Gastrocnemius medialis (tissue), 4 donors: ENCODE measurements at regions of chr9 and their contacts with region 1.

Region 1: DNA sequence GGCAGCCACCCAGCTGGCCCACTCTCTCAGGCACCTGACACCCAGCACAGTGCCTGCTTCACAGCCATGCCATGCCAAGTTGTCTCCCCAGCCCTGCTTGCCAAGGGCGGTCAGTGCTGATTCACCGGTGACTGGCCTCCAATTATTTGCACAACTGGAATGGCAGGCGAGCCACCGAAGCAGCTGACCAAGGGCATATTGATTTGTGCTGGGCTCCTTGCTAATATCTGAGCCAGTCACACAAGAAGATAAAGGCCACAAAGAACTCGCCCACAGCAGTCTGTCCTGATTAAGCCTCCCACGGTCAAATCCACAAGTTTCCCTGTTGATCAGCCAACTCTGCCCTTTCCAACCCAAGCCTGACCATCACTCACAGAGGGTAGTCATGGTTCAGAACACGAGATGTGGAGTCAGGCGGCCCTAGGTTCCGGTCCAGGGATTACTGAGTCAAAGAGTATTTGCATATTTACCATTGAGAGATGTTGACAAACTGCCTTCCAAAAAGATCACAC is 6.4 kb upstream of the EEIG1 start:
- DNase-seq: peak; percentile 89 to 95
- ATAC-seq: peak; percentile 92 to 96
- H3K4me3 ChIP-seq: no peak overlapping the region
- H3K27ac ChIP-seq: peak overlapping the region; percentile 76 to 83 (median 82)
- H3K4me1 ChIP-seq: peaks cover 14 to 25% of the 10 kb centered on the region in 2 donors
- H3K27me3 ChIP-seq: no peaks in the 10 kb centered on the region
- CTCF ChIP-seq: no peak
- POLR2A ChIP-seq: no peak

Region 2: DNA sequence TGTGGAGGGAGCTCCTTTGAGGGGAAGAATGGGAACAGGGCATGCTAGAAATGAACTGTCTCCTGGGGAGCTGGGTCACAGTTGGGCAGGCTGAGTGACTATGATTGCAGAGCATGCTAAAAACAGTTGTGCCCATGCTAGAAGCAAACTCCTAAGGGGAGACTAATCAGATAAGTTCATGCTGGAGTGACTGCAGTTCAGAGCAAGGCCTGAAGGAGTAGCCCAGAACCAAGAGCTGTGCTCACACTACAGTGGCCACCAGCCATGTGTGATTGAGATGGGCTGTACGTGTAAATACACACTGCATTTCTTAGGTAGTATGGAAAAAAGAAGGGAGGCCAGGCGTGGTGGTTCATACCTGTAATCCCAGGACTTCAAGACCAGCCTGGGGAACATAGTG is 99.4 kb before region 1 on chr9:
- in situ Hi-C with region 1: no loop called
- intact Hi-C with region 1: no loop called
- DNase-seq: no peak
- ATAC-seq: no peak
- H3K4me3 ChIP-seq: no peak overlapping the region
- H3K27ac ChIP-seq: no peak overlapping the region
- H3K4me1 ChIP-seq: peaks cover 13% of the 10 kb centered on the region in 2 donors
- H3K27me3 ChIP-seq: no peaks in the 10 kb centered on the region
- CTCF ChIP-seq: no peak
- POLR2A ChIP-seq: no peak

Region 3: GRCh38 chr9:128007566-128008138 is 20.5 kb after region 1 on chr9:
- in situ Hi-C with region 1: no loop called
- intact Hi-C with region 1: no loop called
- DNase-seq: peak in 1 of 2 donors; percentile 35
- ATAC-seq: peak in 1 of 2 donors; percentile 54
- H3K4me3 ChIP-seq: no peak overlapping the region
- H3K27ac ChIP-seq: no peak overlapping the region
- H3K4me1 ChIP-seq: no peaks in the 10 kb centered on the region
- H3K27me3 ChIP-seq: no peaks in the 10 kb centered on the region
- CTCF ChIP-seq: no peak
- POLR2A ChIP-seq: no peak

Region 4: GRCh38 chr9:128053560-128053959 is 66.4 kb after region 1 on chr9:
- in situ Hi-C with region 1: no loop called
- intact Hi-C with region 1: loop called (anchors 5 kb)
- DNase-seq: peak in 1 of 2 donors; percentile 41
- ATAC-seq: no peak
- H3K4me3 ChIP-seq: no peak overlapping the region
- H3K27ac ChIP-seq: peak overlapping the region in 2 of 4 donors; percentile 85 to 86
- H3K4me1 ChIP-seq: peaks cover 33 to 43% of the 10 kb centered on the region in 2 donors
- H3K27me3 ChIP-seq: no peaks in the 10 kb centered on the region
- CTCF ChIP-seq: no peak
- POLR2A ChIP-seq: no peak